PC-3 (cell line): ENCODE measurements at regions of chr20 and their contacts with region 1.

Region 1: DNA sequence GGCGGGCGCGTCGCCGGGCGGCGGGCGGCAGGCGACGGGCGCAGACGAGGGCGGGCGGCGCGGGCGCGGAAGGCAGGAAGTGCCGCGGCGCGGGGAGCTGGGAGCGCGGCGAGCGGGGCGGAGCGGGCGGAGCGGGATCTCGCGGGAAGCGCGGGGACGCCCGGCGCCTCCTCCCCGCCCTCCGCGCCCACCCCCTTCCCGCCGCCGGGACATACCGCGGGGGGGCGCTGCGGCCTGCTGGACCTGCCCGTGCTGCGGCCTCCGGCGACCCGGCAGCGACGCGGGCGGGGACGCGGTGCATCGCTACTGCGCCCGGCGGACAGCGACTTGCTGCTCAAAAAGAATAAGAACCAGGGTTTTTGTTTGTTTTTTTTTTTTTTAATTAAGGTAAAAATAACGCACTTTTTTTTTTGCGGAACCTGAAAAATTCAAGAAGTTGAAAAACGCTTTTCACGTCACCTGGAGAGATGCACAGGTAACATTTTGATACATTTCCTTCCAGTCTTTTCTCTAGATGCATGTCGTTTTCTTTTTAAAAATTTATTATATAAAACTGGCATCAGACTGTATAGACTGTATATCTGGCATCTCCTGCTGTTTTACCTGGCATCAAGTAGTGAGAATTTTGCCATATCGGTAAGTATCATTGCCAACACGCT is at the start of gene CENPB:
- DNase-seq: peak; percentile 94
- ATAC-seq: peak; percentile 76
- H3K4me3 ChIP-seq: peak within 1 kb of the TSS; percentile 77
- H3K27ac ChIP-seq: peak within 1 kb of the TSS; percentile 55
- H3K4me1 ChIP-seq: peaks cover 36% of the 10 kb centered on the region
- H3K27me3 ChIP-seq: no peaks in the 10 kb centered on the region
- CTCF ChIP-seq: peak; percentile 73
- total RNA-seq, gene CENPB: 213 and 276 TPM in 2 replicates

Region 2: GRCh38 chr20:3854462-3854871 is 67.7 kb after region 1 on chr20:
- CTCF ChIA-PET with region 1: interaction called, 3 read pairs
- POLR2A ChIA-PET with region 1: no interaction called
- intact Hi-C with region 1: loop called (anchors 1 kb)
- DNase-seq: peak; percentile 33
- ATAC-seq: peak; percentile 70
- H3K4me3 ChIP-seq: no peak overlapping the region
- H3K27ac ChIP-seq: no peak overlapping the region
- H3K4me1 ChIP-seq: 0 out of 2 replicates have a peak, but pooled peaks cover 5% of the 10 kb centered on the region
- H3K27me3 ChIP-seq: no peaks in the 10 kb centered on the region
- CTCF ChIP-seq: no peak